ENCODE measurements at regions of chr22 and their contacts with region 1.

Region 1: GRCh38 chr22:42863349-42863961 is 6.4 kb upstream of the ARFGAP3 start:
- DNase-seq: peak; percentile 85
- H3K4me3 ChIP-seq: no peak overlapping the region
- H3K27ac ChIP-seq: peak overlapping the region; percentile 57
- H3K4me1 ChIP-seq: peaks cover 13% of the 10 kb centered on the region
- H3K27me3 ChIP-seq: no peaks in the 10 kb centered on the region
- CTCF ChIP-seq: no peak

Region 2: GRCh38 chr22:42621505-42622002 is 241.9 kb before region 1 on chr22:
- CTCF ChIA-PET with region 1: no interaction called
- dilution Hi-C with region 1: no loop called
- in situ Hi-C with region 1: no loop called
- intact Hi-C with region 1: loop called (anchors 1 kb)
- DNase-seq: peak; percentile 55
- H3K4me3 ChIP-seq: no peak overlapping the region
- H3K27ac ChIP-seq: peak overlapping the region; percentile 53
- H3K4me1 ChIP-seq: peaks cover 24% of the 10 kb centered on the region
- H3K27me3 ChIP-seq: no peaks in the 10 kb centered on the region
- CTCF ChIP-seq: peak; percentile 90 to 96

Region 3: DNA sequence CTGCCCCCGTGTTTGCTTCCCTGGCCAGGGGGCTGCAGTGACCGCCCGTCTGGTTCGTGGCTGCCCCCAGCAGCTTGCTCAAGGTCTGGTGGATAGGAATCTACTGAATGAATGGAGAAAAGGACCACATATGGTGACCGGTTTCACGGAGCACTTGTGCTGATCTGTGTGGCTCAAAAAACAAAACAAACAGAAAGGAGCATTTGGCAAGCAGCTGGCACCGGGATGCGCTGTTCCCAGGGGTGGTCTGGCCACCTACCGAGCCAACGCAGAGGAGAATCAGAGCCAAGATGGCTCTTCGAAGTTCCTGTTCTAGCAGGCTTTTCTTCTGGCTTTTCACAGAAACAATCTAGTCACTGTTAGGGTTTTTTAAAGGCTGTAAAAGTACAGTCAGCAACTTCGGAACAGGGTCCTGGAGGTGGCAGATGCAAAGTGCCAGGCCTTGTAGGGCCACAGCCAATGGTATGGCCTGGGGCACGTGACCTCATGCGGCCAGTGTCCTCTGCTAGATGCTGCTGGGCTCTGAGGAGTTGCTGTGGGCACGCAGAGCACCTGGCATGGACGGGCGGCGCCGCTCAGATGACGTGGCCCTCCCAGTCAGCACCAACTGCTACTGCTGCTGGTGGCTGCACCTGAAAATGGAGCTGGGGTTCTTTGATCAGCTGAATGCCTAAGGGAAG is 178.8 kb after region 1 on chr22:
- CTCF ChIA-PET with region 1: interaction called, 35 read pairs
- dilution Hi-C with region 1: no loop called
- in situ Hi-C with region 1: no loop called
- intact Hi-C with region 1: no loop called
- DNase-seq: peak; percentile 69
- H3K4me3 ChIP-seq: no peak overlapping the region
- H3K27ac ChIP-seq: no peak overlapping the region
- H3K4me1 ChIP-seq: peaks cover 9% of the 10 kb centered on the region
- H3K27me3 ChIP-seq: no peaks in the 10 kb centered on the region
- CTCF ChIP-seq: no peak

Measured in mammary epithelial cell (primary cell).